Mucosa of descending colon (tissue), 3 donors: ENCODE measurements at regions of chr17 and their contacts with region 1.

Region 1: GRCh38 chr17:68260051-68260762 is 12.4 kb downstream of the AMZ2 start:
- DNase-seq: no peak
- ATAC-seq: no peak
- H3K4me3 ChIP-seq: no peak overlapping the region
- H3K4me1 ChIP-seq: peaks cover 5% of the 10 kb centered on the region
- CTCF ChIP-seq: no peak

Region 2: GRCh38 chr17:67559377-67559966 is 700.7 kb before region 1 on chr17:
- intact Hi-C with region 1: no loop called
- DNase-seq: peak in 1 of 3 donors; percentile 38
- ATAC-seq: peak; percentile 36
- H3K4me3 ChIP-seq: no peak overlapping the region
- H3K4me1 ChIP-seq: no peaks in the 10 kb centered on the region
- CTCF ChIP-seq: no peak

Region 3: DNA sequence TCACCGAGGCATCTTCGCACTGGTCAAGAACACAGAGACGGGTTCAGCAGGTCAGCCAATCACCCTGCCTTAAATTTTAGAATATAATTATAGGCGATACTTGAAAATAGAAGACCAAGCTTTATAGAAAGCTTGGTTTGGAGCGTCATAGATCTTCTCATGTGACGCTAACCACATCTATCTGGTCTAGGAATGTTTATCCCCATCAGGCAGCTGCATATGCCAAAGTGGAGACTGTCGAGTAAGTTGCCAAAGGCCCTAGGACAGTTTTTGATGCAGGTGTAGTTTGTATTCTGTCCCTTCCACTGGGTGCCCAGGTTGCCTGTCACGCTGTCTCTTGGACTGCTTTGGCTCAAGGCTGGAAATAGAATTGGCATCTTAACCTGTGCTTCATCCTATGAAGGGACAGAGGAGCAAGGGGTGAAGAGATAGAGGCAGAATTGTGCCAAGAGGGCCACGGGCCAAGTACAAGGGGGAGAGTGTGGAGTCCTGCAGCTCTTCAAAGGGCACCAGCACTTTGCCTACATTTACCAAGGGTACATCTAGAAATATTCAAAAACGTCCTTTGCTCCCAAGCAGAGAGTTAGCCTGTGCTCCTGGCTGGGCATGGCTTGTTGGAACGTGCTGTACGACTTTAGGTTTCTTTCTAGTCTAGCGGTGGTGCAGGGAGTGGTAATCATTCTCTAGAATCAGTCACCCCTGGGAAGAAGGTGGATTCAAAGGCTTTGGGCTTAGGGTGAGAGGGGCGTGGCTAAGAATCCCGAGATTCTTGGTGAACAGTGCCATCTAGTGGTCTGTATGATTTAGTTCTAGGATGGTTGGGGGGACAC is 202.4 kb after region 1 on chr17:
- intact Hi-C with region 1: loop called (anchors 5 to 10 kb)
- DNase-seq: peak in 1 of 3 donors; percentile 81
- ATAC-seq: peak; percentile 92
- H3K4me3 ChIP-seq: no peak overlapping the region
- H3K4me1 ChIP-seq: peaks cover 6% of the 10 kb centered on the region
- CTCF ChIP-seq: peak; percentile 36